Transverse colon (tissue), 4 donors: ENCODE measurements at regions of chr5 and their contacts with region 1.

Region 1: GRCh38 chr5:118185018-118185417 is 803.3 kb downstream of the DTWD2 start:
- DNase-seq: no peak
- H3K4me3 ChIP-seq: no peak overlapping the region
- H3K27ac ChIP-seq: no peak overlapping the region
- H3K4me1 ChIP-seq: no peaks in the 10 kb centered on the region
- H3K27me3 ChIP-seq: no peaks in the 10 kb centered on the region
- CTCF ChIP-seq: no peak
- EP300 ChIP-seq: no peak
- POLR2A ChIP-seq: no peak

Region 2: DNA sequence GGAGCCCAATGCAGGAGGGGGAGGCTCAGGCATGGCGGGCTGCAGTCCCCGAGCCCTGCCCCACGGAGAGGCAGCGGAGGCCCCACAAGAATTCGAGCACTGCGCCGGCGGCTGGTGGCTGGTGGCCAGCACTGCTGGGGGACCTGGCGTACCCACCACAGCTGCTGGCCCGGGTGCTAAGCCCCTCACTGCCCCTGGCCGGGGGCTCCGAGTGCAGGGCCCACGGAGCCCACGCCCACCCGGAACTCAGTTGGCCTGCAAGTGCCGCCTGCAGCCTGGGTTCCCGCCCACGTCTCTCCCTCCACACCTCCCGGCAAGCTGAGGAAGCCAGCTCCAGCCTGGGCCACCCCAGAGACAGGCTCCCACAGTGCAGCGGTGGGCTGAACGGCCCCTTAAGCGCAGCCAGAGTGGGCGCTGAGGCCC is 23.0 kb after region 1 on chr5:
- in situ Hi-C with region 1: no loop called
- intact Hi-C with region 1: loop called (anchors 2 kb)
- DNase-seq: no peak
- H3K4me3 ChIP-seq: no peak overlapping the region
- H3K27ac ChIP-seq: no peak overlapping the region
- H3K4me1 ChIP-seq: no peaks in the 10 kb centered on the region
- H3K27me3 ChIP-seq: no peaks in the 10 kb centered on the region
- CTCF ChIP-seq: no peak
- EP300 ChIP-seq: no peak
- POLR2A ChIP-seq: no peak

Region 3: GRCh38 chr5:118326481-118327045 is 141.5 kb after region 1 on chr5:
- in situ Hi-C with region 1: no loop called
- intact Hi-C with region 1: no loop called
- DNase-seq: no peak
- H3K4me3 ChIP-seq: no peak overlapping the region
- H3K27ac ChIP-seq: no peak overlapping the region
- H3K4me1 ChIP-seq: no peaks in the 10 kb centered on the region
- H3K27me3 ChIP-seq: no peaks in the 10 kb centered on the region
- CTCF ChIP-seq: no peak
- EP300 ChIP-seq: no peak
- POLR2A ChIP-seq: no peak